ENCODE measurements at regions of chr2 and their contacts with region 1.

Region 1: DNA sequence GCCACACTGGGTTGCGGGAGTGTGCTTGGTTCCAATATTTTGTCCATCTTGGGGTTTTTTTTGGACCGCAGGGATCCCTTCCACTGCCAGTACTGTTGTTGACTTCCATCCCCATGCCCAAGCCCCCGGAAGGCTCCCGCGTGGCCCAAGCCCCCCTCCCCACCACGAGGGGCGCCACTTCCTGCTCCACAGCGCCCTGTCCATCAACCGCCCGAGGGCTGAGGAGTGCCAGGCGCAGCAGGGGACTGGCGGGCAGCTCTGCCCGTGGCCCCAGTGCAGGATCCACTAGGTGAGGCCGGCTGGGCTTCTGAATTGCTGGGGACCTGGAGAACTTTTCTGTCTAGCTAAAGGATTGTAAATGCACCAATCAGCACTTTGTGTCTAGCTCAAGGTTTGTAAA is 281.4 kb upstream of the CHAC2 start:
- DNase-seq: no peak

Region 2: GRCh38 chr2:52622266-52622665 is 863.9 kb before region 1 on chr2:
- intact Hi-C with region 1: loop called in 1 of 2 experiments (anchors 10 kb)
- DNase-seq: no peak

Measured in posterior vena cava (tissue), 2 donors.